ENCODE measurements at regions of chr6 and their contacts with region 1.

Region 1: DNA sequence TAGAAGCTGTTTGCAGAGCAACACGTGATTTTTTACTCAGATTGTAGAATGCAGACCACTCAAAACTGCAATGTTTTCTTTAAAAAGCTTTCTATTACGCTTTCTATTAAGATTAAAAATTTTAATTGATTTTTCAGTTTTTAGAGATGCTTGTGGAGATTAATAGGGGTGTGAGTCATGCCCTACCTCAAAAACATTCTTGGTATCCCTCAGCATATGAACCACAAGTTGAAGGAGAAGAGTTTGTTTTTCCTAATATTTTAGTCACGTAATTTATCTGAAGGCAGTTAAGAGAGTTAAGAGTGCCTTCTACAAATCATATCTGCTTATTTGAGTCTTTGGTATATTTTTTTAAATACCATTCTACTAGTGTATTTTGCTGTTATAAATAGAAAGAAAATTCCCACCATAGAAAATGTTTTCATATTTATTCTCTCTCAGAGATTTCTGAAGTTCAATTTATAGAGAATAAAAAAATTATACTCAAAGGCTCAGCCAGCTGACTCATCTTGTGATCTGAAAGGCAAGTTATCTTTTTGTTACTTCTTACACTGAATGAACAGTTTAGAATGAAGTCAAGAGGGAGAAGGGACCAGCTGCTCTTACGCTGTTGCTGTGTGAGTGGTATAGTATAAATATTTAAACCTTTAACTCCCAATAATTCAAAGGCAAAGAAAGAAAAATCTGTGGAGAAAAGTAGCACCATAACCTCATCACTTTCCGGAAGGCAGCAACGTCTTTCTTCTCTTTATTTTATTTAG is 7.6 kb downstream of the RIPOR2 start:
- DNase-seq: no peak
- ATAC-seq: peak; percentile 15
- H3K4me3 Mint-ChIP-seq: peak overlapping the region; percentile 84
- H3K27ac Mint-ChIP-seq: peak overlapping the region; percentile 95
- H3K4me1 Mint-ChIP-seq: peaks cover 90% of the 10 kb centered on the region
- H3K27me3 Mint-ChIP-seq: no peaks in the 10 kb centered on the region

Region 2: DNA sequence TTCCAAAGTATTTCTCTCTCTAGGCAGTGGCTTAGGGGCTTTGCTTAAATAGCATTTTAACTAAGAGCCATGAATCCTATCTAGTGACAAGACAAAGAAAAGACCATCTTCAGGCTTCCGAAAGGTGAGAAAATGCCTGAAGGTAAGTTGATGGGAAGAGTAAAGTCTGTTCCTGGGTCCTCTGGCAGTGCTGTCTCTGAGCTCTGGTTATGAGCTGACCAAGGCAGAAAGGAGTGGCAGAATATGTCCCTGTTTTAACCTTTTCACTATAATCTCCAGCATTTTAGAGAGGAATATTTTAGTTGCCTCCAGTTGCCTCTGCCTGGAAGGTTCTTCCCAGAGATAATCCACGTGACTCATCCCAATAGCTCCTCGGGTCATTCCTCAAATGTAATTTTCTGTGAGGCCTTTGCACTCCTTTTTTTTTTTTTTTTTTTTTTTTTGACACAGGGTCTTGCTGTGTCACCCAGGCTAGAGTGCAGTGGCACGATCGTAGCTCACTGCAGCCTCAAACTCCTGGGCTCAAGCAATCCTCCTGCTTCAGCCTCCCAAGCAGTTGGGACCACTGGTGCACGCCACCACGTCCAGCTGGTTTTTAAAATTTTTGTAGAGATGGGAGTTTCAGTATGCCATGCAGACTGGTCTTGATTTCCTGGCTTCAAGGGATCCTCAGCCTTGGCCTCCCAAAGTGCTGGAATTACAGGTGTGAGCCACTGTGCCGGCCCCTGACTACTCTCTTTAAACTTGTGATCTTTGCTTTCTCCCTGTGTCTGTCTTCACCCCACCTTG is 125.7 kb before region 1 on chr6:
- CTCF ChIA-PET with region 1: no interaction called
- POLR2A ChIA-PET with region 1: no interaction called
- intact Hi-C with region 1: no loop called
- DNase-seq: no peak
- ATAC-seq: no peak
- H3K4me3 Mint-ChIP-seq: no peak overlapping the region
- H3K27ac Mint-ChIP-seq: no peak overlapping the region
- H3K4me1 Mint-ChIP-seq: peaks cover 19% of the 10 kb centered on the region
- H3K27me3 Mint-ChIP-seq: no peaks in the 10 kb centered on the region

Region 3: DNA sequence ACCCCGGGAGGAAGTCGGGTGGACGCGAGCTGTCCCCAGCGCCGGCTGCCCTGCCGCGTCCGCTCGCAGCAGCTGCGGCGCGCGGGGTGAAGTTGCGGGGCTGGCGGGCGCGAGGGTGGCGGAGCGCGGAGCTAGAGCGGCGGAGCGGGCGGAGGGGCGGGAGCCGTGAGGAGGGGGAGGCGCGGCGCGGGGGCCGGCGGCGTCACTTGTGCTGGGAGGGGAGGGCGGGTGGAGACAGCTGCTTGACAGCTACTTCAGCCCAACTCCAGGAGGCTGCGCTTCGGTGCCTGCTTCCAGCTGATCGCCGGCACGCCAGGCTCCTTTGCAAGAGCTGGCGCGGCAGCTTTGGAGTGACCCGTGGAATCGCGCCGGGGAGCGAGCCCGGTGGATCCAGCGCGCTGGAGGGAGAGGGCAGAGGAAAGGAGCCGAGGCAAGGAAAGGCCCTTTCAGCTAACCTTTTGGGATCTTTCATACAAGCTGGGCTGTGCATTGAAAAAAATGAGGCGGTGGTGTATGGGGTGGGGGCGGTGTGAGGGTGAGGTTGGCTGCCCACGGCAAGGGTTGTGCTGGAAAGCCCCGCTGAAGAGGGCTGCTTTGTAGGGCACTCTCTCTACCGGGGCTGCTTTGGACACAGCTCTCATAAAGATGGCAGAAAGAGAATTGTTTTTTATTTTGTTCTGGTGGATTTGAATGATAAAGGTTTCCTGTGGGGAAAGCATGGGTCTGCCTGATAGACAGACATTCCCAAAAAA is 17.0 kb before region 1 on chr6:
- CTCF ChIA-PET with region 1: interaction called, 135 read pairs
- POLR2A ChIA-PET with region 1: interaction called, 4 read pairs
- intact Hi-C with region 1: loop called in 1 of 2 experiments (anchors 2 kb)
- DNase-seq: peak; percentile 80
- ATAC-seq: peak; percentile 8
- H3K4me3 Mint-ChIP-seq: peak overlapping the region; percentile 85
- H3K27ac Mint-ChIP-seq: peak overlapping the region; percentile 90
- H3K4me1 Mint-ChIP-seq: peaks cover 83% of the 10 kb centered on the region
- H3K27me3 Mint-ChIP-seq: no peaks in the 10 kb centered on the region

Region 4: GRCh38 chr6:25006565-25007001 is 78.4 kb after region 1 on chr6:
- CTCF ChIA-PET with region 1: interaction called, 6 read pairs
- POLR2A ChIA-PET with region 1: interaction called, 3 read pairs
- intact Hi-C with region 1: loop called (anchors 1 to 2 kb)
- DNase-seq: peak; percentile 62
- ATAC-seq: peak; percentile 58
- H3K4me3 Mint-ChIP-seq: peak overlapping the region; percentile 32
- H3K27ac Mint-ChIP-seq: peak overlapping the region; percentile 79
- H3K4me1 Mint-ChIP-seq: peaks cover 83% of the 10 kb centered on the region
- H3K27me3 Mint-ChIP-seq: no peaks in the 10 kb centered on the region